Activated CD4-positive, alpha-beta memory T cell treated with anti-CD3 and anti-CD28 coated beads, Interleukin-2, amount 10 ng/mL, durations not matched to agents 7 days and 5 days (primary cell): ENCODE measurements at regions of chr4 and their contacts with region 1.

Region 1: DNA sequence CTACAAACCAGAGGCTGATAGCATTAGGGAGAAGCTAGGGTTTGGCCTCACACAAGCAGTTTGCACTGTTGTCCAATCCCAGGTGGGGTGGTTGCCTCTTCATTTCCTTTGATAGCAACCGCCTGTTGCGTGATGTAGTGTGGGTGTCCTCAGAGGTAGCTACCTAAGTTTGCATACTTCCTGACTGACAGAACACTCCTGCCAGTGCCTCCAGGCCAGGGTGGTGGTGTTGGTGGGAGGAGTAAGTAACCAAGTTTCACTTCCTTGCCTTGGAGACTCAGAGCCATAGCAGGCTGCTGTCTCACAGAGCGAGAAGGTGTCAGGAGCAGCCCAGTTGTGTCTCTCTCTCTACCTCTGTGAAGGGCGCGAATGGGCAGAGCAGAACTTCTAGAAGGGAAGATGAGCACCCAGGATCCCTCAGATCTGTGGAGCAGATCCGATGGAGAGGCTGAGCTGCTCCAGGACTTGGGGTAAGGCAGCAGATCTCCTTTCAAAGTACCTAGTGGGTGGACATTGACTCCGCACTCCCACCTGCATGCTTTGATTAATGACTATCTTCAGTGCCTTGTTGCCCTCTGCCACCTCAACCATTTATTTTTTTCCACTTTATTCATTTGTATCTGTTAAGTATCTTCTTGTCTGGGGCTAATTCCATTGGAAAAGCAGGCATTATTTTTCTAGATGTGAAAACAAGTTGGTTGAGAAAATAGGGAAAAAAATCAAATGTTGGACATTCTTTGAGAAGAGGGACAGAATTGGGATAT is at the start of gene DAPP1:
- DNase-seq: peak; percentile 90
- H3K4me3 Mint-ChIP-seq: peak within 1 kb of the TSS; percentile 87
- H3K27ac Mint-ChIP-seq: peak within 1 kb of the TSS; percentile 91
- H3K4me1 Mint-ChIP-seq: peaks cover 72% of the 10 kb centered on the region
- H3K27me3 Mint-ChIP-seq: no peaks in the 10 kb centered on the region
- total RNA-seq, gene DAPP1: 35.8 to 39.4 TPM

Region 2: GRCh38 chr4:99563310-99564186 is 253.2 kb before region 1 on chr4 and contains the start of gene TRMT10A:
- CTCF ChIA-PET with region 1: interaction called, 46 read pairs
- POLR2A ChIA-PET with region 1: interaction called, 13 read pairs
- DNase-seq: peak; percentile 95
- H3K4me3 Mint-ChIP-seq: peak within 1 kb of the TSS; percentile 94
- H3K27ac Mint-ChIP-seq: peak within 1 kb of the TSS; percentile 99
- H3K4me1 Mint-ChIP-seq: peaks cover 31% of the 10 kb centered on the region
- H3K27me3 Mint-ChIP-seq: peaks cover 13% of the 10 kb centered on the region
- total RNA-seq, gene TRMT10A: 8.5 to 10.4 TPM

Region 3: DNA sequence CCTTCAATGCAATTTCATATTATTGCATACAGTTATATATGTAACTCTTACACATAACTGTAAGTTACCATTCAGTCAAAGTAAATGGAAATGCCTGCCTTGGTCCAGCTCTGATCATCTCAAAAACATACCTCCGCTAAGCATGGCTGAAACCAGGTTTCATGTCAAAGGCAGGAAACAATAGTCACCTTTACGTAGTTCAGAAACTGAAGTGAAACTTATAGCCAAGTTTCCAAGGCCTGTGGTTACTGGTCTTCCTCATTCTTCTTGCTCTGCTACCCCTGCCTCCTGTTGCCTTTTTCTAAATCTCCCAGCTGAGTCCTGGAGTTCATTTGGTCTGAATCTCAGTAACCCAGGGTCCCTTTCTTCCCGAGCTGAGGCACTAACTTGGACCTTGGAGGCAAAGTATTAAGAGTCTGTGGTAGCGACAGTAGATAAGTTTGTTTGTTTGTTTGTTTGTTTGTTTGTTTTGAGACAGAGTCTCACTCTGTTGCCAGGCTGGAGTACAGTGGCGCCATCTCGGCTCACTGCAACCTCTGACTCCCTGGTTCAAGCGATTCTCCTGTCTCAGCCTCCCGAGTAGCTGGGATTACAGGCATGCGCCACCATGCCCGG is 30.7 kb after region 1 on chr4:
- CTCF ChIA-PET with region 1: interaction called, 10 read pairs
- POLR2A ChIA-PET with region 1: interaction called, 62 read pairs
- DNase-seq: peak; percentile 34
- H3K4me3 Mint-ChIP-seq: peak overlapping the region; percentile 63
- H3K27ac Mint-ChIP-seq: peak overlapping the region; percentile 96
- H3K4me1 Mint-ChIP-seq: peaks cover 70% of the 10 kb centered on the region
- H3K27me3 Mint-ChIP-seq: no peaks in the 10 kb centered on the region

Region 4: GRCh38 chr4:99855678-99856077 is 39.0 kb after region 1 on chr4:
- CTCF ChIA-PET with region 1: interaction called, 8 read pairs
- POLR2A ChIA-PET with region 1: interaction called, 40 read pairs
- DNase-seq: peak; percentile 43
- H3K4me3 Mint-ChIP-seq: peak overlapping the region; percentile 36
- H3K27ac Mint-ChIP-seq: peak overlapping the region; percentile 83
- H3K4me1 Mint-ChIP-seq: peaks cover 71% of the 10 kb centered on the region
- H3K27me3 Mint-ChIP-seq: no peaks in the 10 kb centered on the region

Region 5: GRCh38 chr4:99861120-99861905 is 44.6 kb after region 1 on chr4:
- CTCF ChIA-PET with region 1: interaction called, 4 read pairs
- POLR2A ChIA-PET with region 1: interaction called, 40 read pairs
- DNase-seq: peak; percentile 39
- H3K4me3 Mint-ChIP-seq: no peak overlapping the region
- H3K27ac Mint-ChIP-seq: peak overlapping the region; percentile 68
- H3K4me1 Mint-ChIP-seq: peaks cover 51% of the 10 kb centered on the region
- H3K27me3 Mint-ChIP-seq: no peaks in the 10 kb centered on the region

Region 6: GRCh38 chr4:99885063-99885664 is 68.4 kb after region 1 on chr4:
- CTCF ChIA-PET with region 1: interaction called, 43 read pairs
- POLR2A ChIA-PET with region 1: interaction called, 6 read pairs
- DNase-seq: peak; percentile 28
- H3K4me3 Mint-ChIP-seq: no peak overlapping the region
- H3K27ac Mint-ChIP-seq: no peak overlapping the region
- H3K4me1 Mint-ChIP-seq: peaks cover 4% of the 10 kb centered on the region
- H3K27me3 Mint-ChIP-seq: no peaks in the 10 kb centered on the region

Region 7: DNA sequence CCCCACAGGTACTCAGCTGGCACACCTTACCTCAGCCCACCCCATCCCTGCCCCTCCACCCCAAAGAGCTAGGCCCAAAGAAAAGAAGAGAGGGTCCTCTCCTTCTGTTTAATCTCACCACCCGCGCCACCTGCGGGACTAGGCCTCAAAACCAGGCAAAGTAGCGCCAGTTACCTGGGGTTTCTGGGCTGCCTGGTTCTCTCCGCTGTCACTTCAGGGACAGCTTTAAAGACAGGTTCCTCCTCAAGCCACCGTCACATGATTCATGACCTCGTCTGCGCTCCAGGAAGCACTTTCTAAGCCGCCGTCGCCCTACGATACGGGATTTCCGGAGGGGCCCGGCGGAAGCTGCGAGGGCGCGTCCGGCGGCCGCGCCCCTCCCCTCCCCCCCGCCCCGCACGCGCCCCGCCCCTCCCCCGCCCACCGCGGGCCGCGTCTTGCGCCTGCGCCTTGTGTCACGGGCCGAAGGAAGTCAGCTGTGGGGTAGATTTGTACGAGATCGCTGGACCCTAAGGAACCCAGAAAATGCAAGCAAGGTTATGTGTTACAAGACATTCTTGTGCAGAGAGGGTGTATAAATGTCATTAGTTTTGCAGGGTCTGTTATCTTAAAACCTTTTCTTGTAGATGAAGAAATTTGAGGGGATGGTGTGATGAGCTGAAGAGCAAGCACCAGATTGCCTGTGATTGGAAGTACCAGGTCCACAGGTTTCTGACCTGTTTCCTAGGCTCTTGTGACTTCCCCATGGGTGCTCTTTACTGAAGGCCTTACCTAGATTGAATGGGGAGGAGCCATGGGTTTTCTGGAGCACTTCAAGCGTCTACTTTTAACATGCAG is 77.7 kb after region 1 on chr4 and contains the start of gene LAMTOR3:
- CTCF ChIA-PET with region 1: interaction called, 5 read pairs
- POLR2A ChIA-PET with region 1: interaction called, 27 read pairs
- DNase-seq: peak; percentile 92
- H3K4me3 Mint-ChIP-seq: peak within 1 kb of the TSS; percentile 98
- H3K27ac Mint-ChIP-seq: peak within 1 kb of the TSS; percentile 91
- H3K4me1 Mint-ChIP-seq: peaks cover 42% of the 10 kb centered on the region
- H3K27me3 Mint-ChIP-seq: no peaks in the 10 kb centered on the region
- total RNA-seq, gene LAMTOR3: 28.1 to 29.2 TPM